ENCODE measurements at regions of chr20 and their contacts with region 1.

Region 1: GRCh38 chr20:58950603-58951002 is 30.5 kb upstream of the NELFCD start:
- DNase-seq: no peak
- H3K4me3 ChIP-seq: no peak overlapping the region
- H3K27ac ChIP-seq: no peak overlapping the region
- H3K4me1 ChIP-seq: no peaks in the 10 kb centered on the region
- H3K27me3 ChIP-seq: no peaks in the 10 kb centered on the region
- CTCF ChIP-seq: no peak
- POLR2A ChIP-seq: no peak

Region 2: GRCh38 chr20:58256842-58257241 is 693.8 kb before region 1 on chr20:
- intact Hi-C with region 1: loop called (anchors 5 kb)
- DNase-seq: no peak
- H3K4me3 ChIP-seq: no peak overlapping the region
- H3K27ac ChIP-seq: no peak overlapping the region
- H3K4me1 ChIP-seq: no peaks in the 10 kb centered on the region
- H3K27me3 ChIP-seq: no peaks in the 10 kb centered on the region
- CTCF ChIP-seq: no peak
- POLR2A ChIP-seq: no peak

Region 3: DNA sequence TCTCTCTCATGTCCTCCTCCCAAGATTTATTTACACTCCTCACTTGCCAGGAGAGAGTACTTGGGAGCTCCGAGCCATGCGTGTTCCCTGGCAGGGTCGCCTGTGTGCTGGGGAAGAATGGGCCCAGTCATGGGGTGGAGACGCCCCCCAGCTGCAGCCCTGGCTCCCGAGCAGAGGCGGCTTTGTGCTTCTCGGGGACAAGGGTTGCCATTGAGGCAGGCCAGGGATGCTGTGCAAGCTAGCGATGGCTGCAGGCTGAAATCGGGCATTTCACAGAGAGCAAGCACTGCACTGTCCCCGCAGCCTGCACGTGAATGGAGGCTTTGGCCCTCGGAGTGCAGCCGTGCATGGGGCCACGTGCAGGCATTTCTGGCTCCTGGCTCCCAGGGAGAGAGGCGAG is 677.6 kb after region 1 on chr20:
- intact Hi-C with region 1: no loop called
- DNase-seq: no peak
- H3K4me3 ChIP-seq: no peak overlapping the region
- H3K27ac ChIP-seq: no peak overlapping the region
- H3K4me1 ChIP-seq: no peaks in the 10 kb centered on the region
- H3K27me3 ChIP-seq: peaks cover 0 to 54% of the 10 kb centered on the region in 2 donors
- CTCF ChIP-seq: no peak
- POLR2A ChIP-seq: no peak

Region 4: DNA sequence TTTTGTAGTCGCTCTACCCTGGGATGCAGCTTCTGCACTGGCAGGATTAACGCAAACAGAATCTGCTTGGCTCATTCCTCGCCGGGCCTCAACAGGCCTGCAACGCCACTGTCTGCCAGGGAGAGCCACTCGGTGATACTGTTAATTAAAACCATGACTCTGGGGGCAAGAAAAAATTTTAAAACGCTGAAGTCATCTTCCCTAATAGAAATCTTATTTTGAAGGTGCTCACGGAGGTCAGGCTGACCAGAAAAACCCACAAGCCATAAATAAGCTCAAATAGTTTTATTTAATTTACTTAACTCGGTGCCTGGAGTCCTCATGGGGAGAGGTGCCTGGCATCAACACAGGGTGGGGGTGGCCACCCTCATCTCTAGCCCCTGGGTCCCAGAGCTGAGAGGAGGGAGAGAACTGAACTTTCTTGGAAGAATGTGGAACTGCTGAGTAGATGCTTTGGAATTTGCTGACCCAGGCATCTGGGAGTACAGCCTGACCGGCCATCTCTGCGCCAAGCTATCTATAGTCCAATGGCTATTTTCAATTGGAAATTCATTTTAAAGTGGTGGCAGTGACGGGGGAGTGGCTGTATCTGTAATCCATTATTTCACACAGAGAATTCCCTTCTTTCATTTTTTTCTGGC is 1112.3 kb after region 1 on chr20:
- intact Hi-C with region 1: loop called (anchors 10 kb)
- DNase-seq: peak in 1 of 2 donors; percentile 33
- H3K4me3 ChIP-seq: peak overlapping the region in 1 of 3 donors; percentile 22
- H3K27ac ChIP-seq: peak overlapping the region; percentile 53 to 69
- H3K4me1 ChIP-seq: no peaks in the 10 kb centered on the region
- H3K27me3 ChIP-seq: no peaks in the 10 kb centered on the region
- CTCF ChIP-seq: no peak
- POLR2A ChIP-seq: no peak

Measured in breast epithelium (tissue), 4 donors.